BJ (cell line): ENCODE measurements at regions of chr3 and their contacts with region 1.

Region 1: GRCh38 chr3:128226795-128227395 is 73.6 kb downstream of the EEFSEC start:
- DNase-seq: no peak
- H3K4me3 ChIP-seq: no peak overlapping the region
- H3K27me3 ChIP-seq: no peaks in the 10 kb centered on the region
- CTCF ChIP-seq: peak; percentile 79

Region 2: GRCh38 chr3:127723011-127723567 is 503.8 kb before region 1 on chr3:
- CTCF ChIA-PET with region 1: no interaction called
- POLR2A ChIA-PET with region 1: no interaction called
- DNase-seq: no peak
- H3K4me3 ChIP-seq: no peak overlapping the region
- H3K27me3 ChIP-seq: no peaks in the 10 kb centered on the region; the same call in 1 of the 2 replicates
- CTCF ChIP-seq: no peak

Region 3: GRCh38 chr3:128254116-128254768 is 27.3 kb after region 1 on chr3:
- CTCF ChIA-PET with region 1: interaction called, 13 read pairs
- POLR2A ChIA-PET with region 1: no interaction called
- DNase-seq: no peak
- H3K4me3 ChIP-seq: no peak overlapping the region
- H3K27me3 ChIP-seq: no peaks in the 10 kb centered on the region
- CTCF ChIP-seq: no peak

Region 4: GRCh38 chr3:128698211-128699064 is 471.5 kb after region 1 on chr3:
- CTCF ChIA-PET with region 1: no interaction called
- POLR2A ChIA-PET with region 1: no interaction called
- DNase-seq: no peak
- H3K4me3 ChIP-seq: peak overlapping the region; percentile 49
- H3K27me3 ChIP-seq: no peaks in the 10 kb centered on the region
- CTCF ChIP-seq: no peak